Sigmoid colon (tissue), 7 donors: ENCODE measurements at regions of chr9 and their contacts with region 1.

Region 1: GRCh38 chr9:89278997-89279739 is 31.8 kb upstream of the CKS2 start:
- DNase-seq: no peak
- H3K4me3 ChIP-seq: no peak overlapping the region
- H3K27ac ChIP-seq: no peak overlapping the region
- H3K4me1 ChIP-seq: peaks cover 0 to 8% (median 0%) of the 10 kb centered on the region in 4 donors
- H3K27me3 ChIP-seq: no peaks in the 10 kb centered on the region
- CTCF ChIP-seq: peak in 3 of 4 experiments; percentile 46 to 71 (median 57)
- EP300 ChIP-seq: no peak
- POLR2A ChIP-seq: no peak

Region 2: GRCh38 chr9:88593537-88594185 is 685.5 kb before region 1 on chr9:
- intact Hi-C with region 1: loop called (anchors 5 kb)
- DNase-seq: no peak
- H3K4me3 ChIP-seq: no peak overlapping the region
- H3K27ac ChIP-seq: no peak overlapping the region
- H3K4me1 ChIP-seq: no peaks in the 10 kb centered on the region
- H3K27me3 ChIP-seq: no peaks in the 10 kb centered on the region
- CTCF ChIP-seq: peak; percentile 54 to 67 (median 65)
- EP300 ChIP-seq: no peak
- POLR2A ChIP-seq: no peak

Region 3: GRCh38 chr9:89225991-89226471 is 53.1 kb before region 1 on chr9:
- intact Hi-C with region 1: loop called (anchors 10 kb)
- DNase-seq: no peak
- H3K4me3 ChIP-seq: no peak overlapping the region
- H3K27ac ChIP-seq: peak overlapping the region in 2 of 4 donors; percentile 24 to 66
- H3K4me1 ChIP-seq: peaks cover 0 to 27% (median 14%) of the 10 kb centered on the region in 4 donors
- H3K27me3 ChIP-seq: no peaks in the 10 kb centered on the region
- CTCF ChIP-seq: no peak
- EP300 ChIP-seq: no peak
- POLR2A ChIP-seq: no peak

Region 4: GRCh38 chr9:89466451-89467277 is 187.5 kb after region 1 on chr9:
- intact Hi-C with region 1: no loop called
- DNase-seq: peak; percentile 53
- H3K4me3 ChIP-seq: no peak overlapping the region
- H3K27ac ChIP-seq: no peak overlapping the region
- H3K4me1 ChIP-seq: no peaks in the 10 kb centered on the region
- H3K27me3 ChIP-seq: no peaks in the 10 kb centered on the region
- CTCF ChIP-seq: no peak
- EP300 ChIP-seq: no peak
- POLR2A ChIP-seq: no peak